ENCODE measurements at regions of chr15 and their contacts with region 1.

Region 1: GRCh38 chr15:72671535-72671934 is 14.4 kb downstream of the HIGD2B start:
- DNase-seq: no peak
- ATAC-seq: no peak
- H3K4me3 ChIP-seq: no peak overlapping the region
- H3K4me3 Mint-ChIP-seq: no peak overlapping the region
- H3K27ac ChIP-seq: no peak overlapping the region
- H3K27ac Mint-ChIP-seq: no peak overlapping the region
- H3K4me1 ChIP-seq: no peaks in the 10 kb centered on the region
- H3K4me1 Mint-ChIP-seq: peaks cover 7% of the 10 kb centered on the region
- H3K27me3 ChIP-seq: peaks cover 0 to 2% of the 10 kb centered on the region in 2 experiments
- H3K27me3 Mint-ChIP-seq: peaks cover 19% of the 10 kb centered on the region
- CTCF ChIP-seq: no peak

Region 2: GRCh38 chr15:72312605-72313447 is 358.7 kb before region 1 on chr15:
- CTCF ChIA-PET with region 1: no interaction called
- POLR2A ChIA-PET with region 1: no interaction called
- intact Hi-C with region 1: loop called in 1 of 2 experiments (anchors 10 kb)
- DNase-seq: peak; percentile 12 to 74 (median 60)
- ATAC-seq: peak; percentile 89
- H3K4me3 ChIP-seq: no peak overlapping the region
- H3K4me3 Mint-ChIP-seq: no peak overlapping the region
- H3K27ac ChIP-seq: no peak overlapping the region
- H3K27ac Mint-ChIP-seq: no peak overlapping the region
- H3K4me1 ChIP-seq: no peaks in the 10 kb centered on the region
- H3K4me1 Mint-ChIP-seq: no peaks in the 10 kb centered on the region
- H3K27me3 ChIP-seq: no peaks in the 10 kb centered on the region
- H3K27me3 Mint-ChIP-seq: no peaks in the 10 kb centered on the region
- CTCF ChIP-seq: peak; percentile 69

Region 3: GRCh38 chr15:72339777-72340177 is 331.8 kb before region 1 on chr15:
- CTCF ChIA-PET with region 1: no interaction called
- POLR2A ChIA-PET with region 1: no interaction called
- intact Hi-C with region 1: loop called (anchors 5 to 10 kb)
- DNase-seq: no peak
- ATAC-seq: no peak
- H3K4me3 ChIP-seq: no peak overlapping the region
- H3K4me3 Mint-ChIP-seq: no peak overlapping the region
- H3K27ac ChIP-seq: no peak overlapping the region
- H3K27ac Mint-ChIP-seq: no peak overlapping the region
- H3K4me1 ChIP-seq: no peaks in the 10 kb centered on the region
- H3K4me1 Mint-ChIP-seq: no peaks in the 10 kb centered on the region
- H3K27me3 ChIP-seq: no peaks in the 10 kb centered on the region
- H3K27me3 Mint-ChIP-seq: no peaks in the 10 kb centered on the region
- CTCF ChIP-seq: no peak

Region 4: DNA sequence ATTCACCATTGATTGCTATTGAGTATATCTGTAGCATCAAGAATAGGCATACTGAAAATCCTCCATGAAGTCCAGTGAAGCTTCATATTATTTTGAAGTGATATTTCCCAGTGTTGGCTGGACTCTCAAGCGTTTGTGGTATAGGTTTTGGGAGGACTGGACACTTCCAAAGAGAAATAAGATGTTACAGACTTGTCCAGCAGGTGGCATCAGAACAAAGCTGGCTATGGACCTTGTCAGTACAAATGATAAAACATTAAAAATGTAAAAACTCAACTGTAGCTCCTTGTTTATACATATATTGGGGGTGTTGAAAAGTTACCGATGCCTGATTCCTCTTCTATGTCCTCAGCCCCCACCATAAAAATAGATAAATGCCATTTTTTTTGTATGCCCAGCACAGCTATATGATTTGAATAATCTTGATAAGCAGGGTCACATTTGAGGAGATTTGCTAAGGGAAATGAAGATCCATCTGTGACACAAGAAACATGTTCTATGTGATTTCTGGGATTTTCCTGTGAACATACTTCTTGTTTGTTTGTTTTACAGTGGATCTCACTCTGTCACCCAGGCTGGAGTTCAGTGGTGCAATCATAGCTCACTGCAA is 71.6 kb before region 1 on chr15:
- CTCF ChIA-PET with region 1: interaction called, 19 read pairs
- POLR2A ChIA-PET with region 1: no interaction called
- intact Hi-C with region 1: loop called (anchors 5 kb)
- DNase-seq: peak in 4 of 9 experiments; percentile 5 to 56 (median 38)
- ATAC-seq: peak; percentile 34
- H3K4me3 ChIP-seq: no peak overlapping the region
- H3K4me3 Mint-ChIP-seq: no peak overlapping the region
- H3K27ac ChIP-seq: no peak overlapping the region
- H3K27ac Mint-ChIP-seq: no peak overlapping the region
- H3K4me1 ChIP-seq: no peaks in the 10 kb centered on the region
- H3K4me1 Mint-ChIP-seq: no peaks in the 10 kb centered on the region
- H3K27me3 ChIP-seq: no peaks in the 10 kb centered on the region
- H3K27me3 Mint-ChIP-seq: no peaks in the 10 kb centered on the region
- CTCF ChIP-seq: peak; percentile 73